Psoas muscle (tissue), 8 donors: ENCODE measurements at regions of chr12 and their contacts with region 1.

Region 1: DNA sequence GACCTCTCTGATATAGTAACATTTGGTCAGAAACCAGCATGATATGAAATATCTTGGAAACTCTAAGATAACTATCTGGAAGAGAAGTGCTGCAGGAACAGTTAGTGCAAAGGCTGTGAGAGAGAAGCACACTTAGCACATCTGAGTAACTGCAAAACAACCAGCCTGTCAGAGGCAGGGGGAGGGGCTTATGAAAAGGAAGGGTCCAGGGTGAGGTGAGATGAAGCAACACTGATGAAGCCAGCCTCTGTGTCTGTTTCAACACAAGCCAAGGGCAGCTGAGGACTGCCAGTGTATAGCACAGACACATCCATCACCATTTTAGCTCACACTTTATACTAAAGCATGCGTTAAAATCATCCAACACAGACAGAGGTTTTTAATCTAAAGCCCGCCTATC is 37.4 kb upstream of the OVCH1 start:
- DNase-seq: no peak
- ATAC-seq: peak in 3 of 4 donors; percentile 69 to 75 (median 70)
- H3K4me3 ChIP-seq: no peak overlapping the region
- H3K27ac ChIP-seq: no peak overlapping the region
- H3K4me1 ChIP-seq: peaks cover 2% of the 10 kb centered on the region
- H3K27me3 ChIP-seq: no peaks in the 10 kb centered on the region
- CTCF ChIP-seq: no peak

Region 2: GRCh38 chr12:30613119-30613830 is 1078.3 kb after region 1 on chr12:
- intact Hi-C with region 1: loop called in 1 of 2 experiments (anchors 5 kb)
- DNase-seq: no peak
- ATAC-seq: no peak
- H3K4me3 ChIP-seq: no peak overlapping the region
- H3K27ac ChIP-seq: no peak overlapping the region
- H3K4me1 ChIP-seq: no peaks in the 10 kb centered on the region
- H3K27me3 ChIP-seq: no peaks in the 10 kb centered on the region
- CTCF ChIP-seq: no peak